ENCODE measurements at regions of chr9 and their contacts with region 1.

Region 1: GRCh38 chr9:33290247-33291030 is at the start of gene NFX1:
- DNase-seq: peak; percentile 98
- H3K4me3 Mint-ChIP-seq: peak within 1 kb of the TSS; percentile 100
- H3K27ac Mint-ChIP-seq: peak within 1 kb of the TSS; percentile 100
- H3K4me1 Mint-ChIP-seq: peaks cover 26% of the 10 kb centered on the region
- H3K27me3 Mint-ChIP-seq: no peaks in the 10 kb centered on the region
- CTCF ChIP-seq: no peak
- total RNA-seq, gene NFX1: 66.7 and 78.5 TPM in 2 replicates

Region 2: DNA sequence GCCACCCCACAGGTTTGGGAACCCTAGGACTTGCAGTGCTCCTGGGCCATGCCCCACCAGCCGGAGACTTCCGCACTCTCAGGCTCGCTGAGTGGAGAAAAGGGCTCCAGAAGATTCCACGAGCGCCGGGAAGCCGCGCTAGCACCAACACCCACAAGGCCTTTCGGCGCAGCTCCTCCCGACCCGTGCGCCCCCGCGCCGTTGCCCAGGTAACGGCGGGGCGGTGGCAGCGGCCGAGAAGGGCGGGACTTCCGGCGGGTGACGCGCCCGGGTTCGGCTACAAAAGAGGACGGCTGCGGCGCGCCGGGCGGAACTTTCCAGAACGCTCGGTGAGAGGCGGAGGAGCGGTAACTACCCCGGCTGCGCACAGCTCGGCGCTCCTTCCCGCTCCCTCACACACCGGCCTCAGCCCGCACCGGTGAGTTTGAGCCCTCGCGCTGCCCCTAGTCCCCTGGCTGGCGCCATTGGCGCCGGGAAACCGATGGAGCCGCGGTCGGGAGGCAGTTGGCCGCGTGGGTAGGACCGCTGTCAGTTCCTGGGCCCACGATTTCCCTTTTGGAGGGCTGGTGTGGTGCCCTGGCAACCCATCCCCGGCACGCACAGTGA is 265.4 kb before region 1 on chr9 and contains the start of gene DNAJA1:
- CTCF ChIA-PET with region 1: no interaction called
- POLR2A ChIA-PET with region 1: interaction called, 17 read pairs
- intact Hi-C with region 1: no loop called
- DNase-seq: peak; percentile 93
- H3K4me3 Mint-ChIP-seq: peak within 1 kb of the TSS; percentile 93
- H3K27ac Mint-ChIP-seq: peak within 1 kb of the TSS; percentile 94
- H3K4me1 Mint-ChIP-seq: peaks cover 41% of the 10 kb centered on the region
- H3K27me3 Mint-ChIP-seq: no peaks in the 10 kb centered on the region
- CTCF ChIP-seq: no peak
- total RNA-seq, gene DNAJA1: 58.2 and 82.7 TPM in 2 replicates

Region 3: GRCh38 chr9:33159760-33160127 is 130.7 kb before region 1 on chr9:
- CTCF ChIA-PET with region 1: interaction called, 3 read pairs
- POLR2A ChIA-PET with region 1: interaction called, 14 read pairs
- intact Hi-C with region 1: no loop called
- DNase-seq: peak; percentile 77
- H3K4me3 Mint-ChIP-seq: peak overlapping the region; percentile 96
- H3K27ac Mint-ChIP-seq: peak overlapping the region; percentile 89
- H3K4me1 Mint-ChIP-seq: peaks cover 76% of the 10 kb centered on the region
- H3K27me3 Mint-ChIP-seq: no peaks in the 10 kb centered on the region
- CTCF ChIP-seq: no peak

Region 4: DNA sequence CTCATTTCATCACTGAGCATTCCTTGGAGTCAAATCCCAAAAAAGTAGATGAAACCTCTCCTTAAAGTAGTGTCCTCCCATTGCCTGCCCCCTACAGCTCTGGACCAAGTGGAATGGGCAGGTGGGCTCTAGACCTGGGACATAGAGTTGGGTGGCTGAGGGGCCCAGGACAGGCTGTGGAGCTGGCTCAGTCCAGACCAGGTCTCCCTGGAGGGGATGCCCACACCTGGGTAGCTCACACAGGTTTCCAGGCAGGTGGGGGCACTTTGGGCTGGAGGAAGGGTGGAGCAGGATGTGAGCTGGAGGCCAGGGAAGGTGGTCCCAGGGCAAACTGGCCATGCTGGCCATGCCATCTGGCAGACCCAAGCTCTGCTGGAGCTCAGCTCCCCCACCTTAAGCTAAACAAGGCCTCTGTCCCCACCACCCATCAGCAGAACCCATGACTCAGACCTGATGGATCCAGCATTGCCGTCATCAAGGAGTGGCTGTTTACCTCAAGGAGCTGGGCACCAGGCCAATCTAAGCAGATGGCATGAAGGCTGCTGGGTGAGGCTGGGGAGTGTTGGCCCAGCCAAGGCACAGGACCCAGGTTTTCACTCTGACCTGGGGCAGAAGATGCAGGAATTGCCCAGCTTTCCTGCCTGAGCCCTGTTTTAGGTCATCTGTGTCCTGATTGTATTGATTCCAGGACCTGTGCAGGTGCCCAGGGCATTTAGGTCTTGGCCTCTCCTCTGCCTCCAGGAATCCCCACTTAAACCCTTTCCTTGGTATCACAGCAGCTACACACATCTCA is 56.6 kb before region 1 on chr9:
- CTCF ChIA-PET with region 1: interaction called, 9 read pairs
- POLR2A ChIA-PET with region 1: interaction called, 63 read pairs
- intact Hi-C with region 1: loop called (anchors 1 kb)
- DNase-seq: peak; percentile 100
- H3K4me3 Mint-ChIP-seq: peak overlapping the region; percentile 2
- H3K27ac Mint-ChIP-seq: peak overlapping the region; percentile 97
- H3K4me1 Mint-ChIP-seq: peaks cover 71% of the 10 kb centered on the region
- H3K27me3 Mint-ChIP-seq: no peaks in the 10 kb centered on the region
- CTCF ChIP-seq: no peak

Region 5: DNA sequence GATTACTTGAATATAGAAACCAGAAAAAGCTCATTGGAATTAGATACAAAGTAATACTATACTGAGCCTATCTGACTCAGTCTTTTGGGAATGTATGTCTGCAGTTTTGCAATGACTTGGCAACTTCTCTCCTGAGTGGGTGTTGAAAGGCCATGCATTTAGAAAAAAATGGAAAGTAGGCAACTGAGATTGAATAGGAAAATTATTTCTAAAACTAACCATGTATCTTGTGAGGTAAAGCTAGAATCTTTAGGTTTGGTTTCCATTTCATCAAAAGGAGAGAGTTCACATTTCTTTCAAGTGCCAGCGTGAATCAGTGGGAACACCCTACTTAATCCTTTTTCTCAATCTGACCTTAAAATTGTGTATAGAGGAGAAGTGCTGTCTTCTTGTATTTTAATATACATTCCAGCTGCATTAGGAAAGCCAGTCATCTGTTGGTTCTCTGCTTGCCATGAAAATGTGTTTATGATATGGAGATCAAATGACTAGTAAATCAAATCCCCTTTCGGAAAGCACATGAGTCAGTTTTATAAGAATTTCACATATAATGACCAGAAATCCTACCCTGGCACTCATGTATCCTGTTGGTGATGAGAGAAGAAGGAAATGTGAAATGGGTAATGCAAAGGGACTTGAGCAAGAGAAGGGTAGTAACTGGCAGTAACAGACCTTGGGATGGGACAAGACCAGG is 30.3 kb after region 1 on chr9:
- CTCF ChIA-PET with region 1: interaction called, 3 read pairs
- POLR2A ChIA-PET with region 1: interaction called, 33 read pairs
- intact Hi-C with region 1: loop called (anchors 2 kb)
- DNase-seq: peak; percentile 92
- H3K4me3 Mint-ChIP-seq: peak overlapping the region; percentile 20
- H3K27ac Mint-ChIP-seq: peak overlapping the region; percentile 70
- H3K4me1 Mint-ChIP-seq: peaks cover 18% of the 10 kb centered on the region
- H3K27me3 Mint-ChIP-seq: no peaks in the 10 kb centered on the region
- CTCF ChIP-seq: no peak

Region 6: GRCh38 chr9:33350310-33350709 is 59.9 kb after region 1 on chr9:
- CTCF ChIA-PET with region 1: interaction called, 3 read pairs
- POLR2A ChIA-PET with region 1: no interaction called
- intact Hi-C with region 1: loop called (anchors 10 kb)
- DNase-seq: peak; percentile 32
- H3K4me3 Mint-ChIP-seq: no peak overlapping the region
- H3K27ac Mint-ChIP-seq: peak overlapping the region; percentile 54
- H3K4me1 Mint-ChIP-seq: no peaks in the 10 kb centered on the region
- H3K27me3 Mint-ChIP-seq: no peaks in the 10 kb centered on the region
- CTCF ChIP-seq: no peak

Region 7: DNA sequence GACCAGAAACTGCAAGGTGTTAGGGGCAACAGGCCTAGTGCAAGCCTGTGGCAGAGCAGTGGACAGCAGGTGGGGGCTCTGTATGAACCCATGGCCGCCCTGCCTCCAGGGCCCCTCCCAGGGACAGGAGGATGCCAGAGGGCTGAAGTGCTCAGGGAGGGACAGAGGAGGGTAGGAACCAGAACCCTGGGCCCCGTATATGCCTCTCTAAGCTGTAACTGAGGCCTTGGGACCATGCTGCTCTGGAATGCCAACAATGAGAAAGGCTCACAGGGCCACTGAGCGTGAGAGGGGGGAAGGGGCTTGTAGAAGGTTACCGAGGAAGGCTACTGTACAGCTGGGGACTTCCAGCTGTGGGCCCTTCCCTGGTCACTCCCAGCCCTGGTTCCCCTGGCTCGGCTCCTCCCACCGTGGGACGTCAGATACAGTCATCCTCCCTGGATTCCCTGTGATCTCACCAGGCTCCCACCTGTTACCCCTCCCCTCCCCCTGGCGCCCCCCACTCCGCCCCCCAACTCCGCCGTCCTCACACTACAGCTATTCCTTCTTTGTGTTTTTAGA is 90.9 kb after region 1 on chr9:
- CTCF ChIA-PET with region 1: no interaction called
- POLR2A ChIA-PET with region 1: no interaction called
- intact Hi-C with region 1: no loop called
- DNase-seq: no peak
- H3K4me3 Mint-ChIP-seq: no peak overlapping the region
- H3K27ac Mint-ChIP-seq: no peak overlapping the region
- H3K4me1 Mint-ChIP-seq: peaks cover 14% of the 10 kb centered on the region
- H3K27me3 Mint-ChIP-seq: no peaks in the 10 kb centered on the region
- CTCF ChIP-seq: no peak

Region 8: DNA sequence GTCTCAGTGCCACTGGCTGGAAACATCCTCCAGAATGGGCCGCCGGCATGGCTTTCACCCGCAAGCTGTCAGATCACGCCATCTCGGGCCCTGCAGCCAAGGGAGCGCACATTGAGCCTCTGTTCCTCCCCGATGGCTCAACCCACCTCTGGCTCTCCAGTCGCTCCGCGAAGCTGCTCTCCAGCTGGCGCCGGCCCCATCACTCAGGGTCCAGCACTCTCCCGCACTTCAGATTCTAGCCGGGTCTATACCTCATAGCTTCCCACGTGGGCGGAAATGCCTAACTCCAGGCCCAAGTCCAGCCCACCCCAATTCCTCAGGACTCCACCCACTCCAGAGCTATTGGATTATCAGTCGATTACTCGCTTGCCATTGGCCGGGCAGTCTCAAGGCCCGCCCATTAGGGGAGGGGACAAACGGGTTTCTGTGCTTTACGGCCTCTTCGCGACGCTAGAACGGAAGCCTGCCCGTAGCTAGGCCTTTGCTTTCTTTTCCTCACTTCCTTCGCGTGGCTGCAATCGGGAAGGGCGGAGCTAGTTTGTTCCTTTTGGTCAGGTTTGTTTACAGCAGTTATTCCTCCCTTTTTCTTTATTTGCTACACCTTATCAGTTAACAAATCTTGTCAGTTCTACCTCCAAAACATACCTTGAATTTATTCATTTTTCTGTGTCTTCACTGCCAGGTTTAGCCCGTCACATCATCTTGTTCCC is 183.4 kb after region 1 on chr9 and contains the start of gene NOL6:
- CTCF ChIA-PET with region 1: interaction called, 5 read pairs
- POLR2A ChIA-PET with region 1: interaction called, 15 read pairs
- intact Hi-C with region 1: no loop called
- DNase-seq: peak; percentile 100
- H3K4me3 Mint-ChIP-seq: peak within 1 kb of the TSS; percentile 97
- H3K27ac Mint-ChIP-seq: peak within 1 kb of the TSS; percentile 89
- H3K4me1 Mint-ChIP-seq: peaks cover 10% of the 10 kb centered on the region
- H3K27me3 Mint-ChIP-seq: no peaks in the 10 kb centered on the region
- CTCF ChIP-seq: no peak
- total RNA-seq, gene NOL6: 37.2 and 48.6 TPM in 2 replicates

Region 9: GRCh38 chr9:33785913-33786312 is 495.5 kb after region 1 on chr9:
- CTCF ChIA-PET with region 1: no interaction called
- POLR2A ChIA-PET with region 1: no interaction called
- intact Hi-C with region 1: no loop called
- DNase-seq: no peak
- H3K4me3 Mint-ChIP-seq: no peak overlapping the region
- H3K27ac Mint-ChIP-seq: no peak overlapping the region
- H3K4me1 Mint-ChIP-seq: peaks cover 20% of the 10 kb centered on the region
- H3K27me3 Mint-ChIP-seq: peaks cover 16% of the 10 kb centered on the region
- CTCF ChIP-seq: peak; percentile 7